Left lung (tissue), 14 donors: ENCODE measurements at regions of chr5 and their contacts with region 1.

Region 1: DNA sequence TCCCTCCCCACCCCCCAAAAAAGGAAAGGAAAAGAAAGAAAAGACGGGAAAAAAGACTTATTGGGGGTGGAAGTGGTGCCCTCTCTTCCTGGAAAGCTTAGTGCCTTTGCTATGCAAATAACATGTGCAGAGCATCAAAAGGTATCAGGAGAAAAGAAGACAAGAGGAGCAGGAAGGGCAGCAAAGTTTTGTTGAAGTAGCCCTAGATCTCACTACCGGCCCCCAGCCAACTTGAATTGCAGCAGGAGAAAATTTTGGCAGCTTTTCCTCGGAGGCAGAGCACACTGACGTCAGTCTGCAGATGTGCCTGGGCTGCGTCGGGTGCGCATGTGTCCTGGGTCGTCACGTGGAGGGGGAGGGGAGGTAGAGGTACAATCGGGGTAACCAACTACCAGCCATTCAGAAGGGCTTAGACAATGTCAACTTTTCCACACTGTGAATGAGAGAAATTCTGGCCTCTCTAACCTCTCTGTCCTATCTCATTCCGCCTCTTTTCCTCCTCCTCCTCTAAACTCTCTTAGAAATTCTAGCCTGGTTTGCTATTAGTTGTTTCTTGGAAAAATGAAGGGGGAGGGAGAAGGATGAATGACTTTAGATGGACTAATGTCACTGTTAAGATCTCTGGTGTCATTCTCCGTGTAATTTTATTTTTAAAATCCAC is at the start of gene ADAMTS6:
- DNase-seq: peak; percentile 87 to 97 (median 94)
- ATAC-seq: peak; percentile 88
- H3K4me3 ChIP-seq: peak within 1 kb of the TSS; percentile 42 to 46
- H3K27ac ChIP-seq: peak within 1 kb of the TSS; percentile 75 to 91
- H3K4me1 ChIP-seq: peaks cover 7 to 30% of the 10 kb centered on the region in 2 donors
- H3K27me3 ChIP-seq: peaks cover 0 to 14% of the 10 kb centered on the region in 2 donors
- CTCF ChIP-seq: no peak
- polyA plus RNA-seq, gene ADAMTS6: 10.3 to 27.2 (median 14.9) TPM

Region 2: GRCh38 chr5:64807520-64807919 is 674.2 kb before region 1 on chr5:
- intact Hi-C with region 1: loop called in 1 of 2 experiments (anchors 5 kb)
- DNase-seq: peak in 1 of 4 donors; percentile 38
- ATAC-seq: peak; percentile 95
- H3K4me3 ChIP-seq: no peak overlapping the region
- H3K27ac ChIP-seq: peak overlapping the region; percentile 24 to 61
- H3K4me1 ChIP-seq: no peaks in the 10 kb centered on the region
- H3K27me3 ChIP-seq: no peaks in the 10 kb centered on the region
- CTCF ChIP-seq: no peak

Region 3: DNA sequence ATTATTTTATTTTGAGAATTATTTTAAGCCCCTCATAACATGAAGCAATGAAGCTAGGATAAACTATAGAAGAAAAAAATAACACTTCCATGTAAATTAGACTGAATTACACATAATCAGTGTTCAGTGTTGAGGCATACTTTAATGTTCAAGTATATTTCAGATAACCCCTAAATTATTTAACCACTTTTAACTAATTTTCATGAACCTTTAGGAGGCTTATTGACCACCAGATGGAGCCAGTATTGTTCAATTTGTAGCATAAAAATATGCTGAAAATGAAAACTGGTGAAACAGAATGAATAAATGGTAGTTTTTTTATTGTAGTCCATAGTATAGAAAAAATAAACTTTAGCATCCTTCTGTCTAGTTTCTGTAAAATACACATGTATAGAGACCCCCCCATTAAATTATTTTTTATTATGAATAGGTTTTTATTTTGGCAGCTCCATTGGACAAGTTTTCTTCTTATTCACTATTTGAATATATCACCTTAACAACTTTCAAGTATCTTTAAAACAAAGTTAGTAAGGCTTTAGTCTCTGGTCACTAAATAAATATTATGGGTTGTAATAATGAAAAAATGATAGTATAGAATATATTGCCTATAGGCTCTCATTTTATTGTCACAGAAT is 522.9 kb before region 1 on chr5:
- intact Hi-C with region 1: loop called in 1 of 2 experiments (anchors 10 kb)
- DNase-seq: peak in 1 of 4 donors; percentile 37
- ATAC-seq: no peak
- H3K4me3 ChIP-seq: no peak overlapping the region
- H3K27ac ChIP-seq: no peak overlapping the region
- H3K4me1 ChIP-seq: no peaks in the 10 kb centered on the region
- H3K27me3 ChIP-seq: no peaks in the 10 kb centered on the region
- CTCF ChIP-seq: peak in 1 of 2 donors; percentile 40

Region 4: DNA sequence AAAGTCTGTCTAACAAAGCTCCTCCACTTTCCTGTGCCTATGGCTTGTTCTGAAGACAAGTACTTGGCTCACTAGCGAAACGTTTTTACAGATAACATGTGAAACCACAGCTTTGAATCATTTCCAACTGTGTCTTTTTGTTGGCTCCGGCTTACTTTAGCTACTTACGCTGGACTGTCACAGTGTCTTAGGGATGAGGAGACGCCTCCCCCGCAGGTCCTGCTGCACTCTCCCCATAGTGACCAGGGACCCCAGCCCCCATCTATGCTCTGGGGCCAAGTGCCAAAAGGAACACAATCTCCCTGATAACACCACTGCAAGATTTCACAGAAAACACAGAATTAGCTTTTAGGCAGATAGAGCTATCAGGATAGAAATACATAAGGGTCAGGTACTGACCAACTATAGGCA is 219.1 kb before region 1 on chr5:
- intact Hi-C with region 1: no loop called
- DNase-seq: peak in 2 of 4 donors; percentile 54 to 72
- ATAC-seq: no peak
- H3K4me3 ChIP-seq: no peak overlapping the region
- H3K27ac ChIP-seq: no peak overlapping the region
- H3K4me1 ChIP-seq: no peaks in the 10 kb centered on the region
- H3K27me3 ChIP-seq: no peaks in the 10 kb centered on the region
- CTCF ChIP-seq: no peak